Mammary epithelial cell (primary cell): ENCODE measurements at regions of chr1 and their contacts with region 1.

Region 1: DNA sequence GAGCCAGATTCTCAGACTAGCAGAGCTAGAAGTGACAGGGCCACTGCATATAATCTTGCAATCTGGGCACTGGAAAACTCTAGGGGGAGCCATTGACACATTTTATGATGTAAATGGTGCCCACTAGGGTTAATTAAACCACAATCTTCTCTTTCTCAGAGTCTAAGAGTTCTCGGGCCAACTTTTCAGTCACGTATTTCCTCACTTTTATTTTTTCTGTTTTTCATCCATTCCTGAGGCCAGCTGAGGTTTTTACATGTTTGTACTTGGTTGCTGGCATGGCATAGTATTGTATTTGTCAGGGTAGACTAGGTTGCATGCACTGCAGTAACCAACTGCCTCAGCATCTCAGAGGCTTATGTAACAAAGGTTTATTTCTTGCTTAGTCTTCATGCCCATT is 138.2 kb downstream of the ZNF326 start:
- DNase-seq: peak; percentile 63
- H3K4me3 ChIP-seq: no peak overlapping the region
- H3K27ac ChIP-seq: no peak overlapping the region
- H3K4me1 ChIP-seq: no peaks in the 10 kb centered on the region
- H3K27me3 ChIP-seq: peaks cover 3% of the 10 kb centered on the region
- CTCF ChIP-seq: peak; percentile 64 to 71

Region 2: DNA sequence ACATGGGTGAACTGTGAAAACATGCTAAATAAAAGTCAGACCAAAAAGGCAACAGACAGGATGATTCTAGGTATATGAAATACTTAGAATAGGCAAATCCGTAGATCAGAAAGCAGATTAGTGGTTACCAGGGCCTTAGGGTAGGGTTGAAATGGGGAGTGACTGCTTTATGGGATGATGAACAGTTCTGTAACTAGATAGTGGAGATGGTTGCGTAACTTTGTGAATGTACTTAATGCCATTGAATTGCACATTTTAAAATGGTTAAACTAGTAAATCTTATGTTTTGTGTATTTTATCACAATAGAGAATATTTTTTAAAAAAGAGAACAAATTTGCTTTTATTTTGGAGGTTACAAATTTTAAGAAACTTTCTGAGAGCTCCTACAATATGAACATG is 120.8 kb before region 1 on chr1:
- CTCF ChIA-PET with region 1: no interaction called
- dilution Hi-C with region 1: no loop called
- in situ Hi-C with region 1: no loop called
- intact Hi-C with region 1: no loop called
- DNase-seq: no peak
- H3K4me3 ChIP-seq: no peak overlapping the region
- H3K27ac ChIP-seq: no peak overlapping the region
- H3K4me1 ChIP-seq: no peaks in the 10 kb centered on the region
- H3K27me3 ChIP-seq: no peaks in the 10 kb centered on the region
- CTCF ChIP-seq: no peak

Region 3: DNA sequence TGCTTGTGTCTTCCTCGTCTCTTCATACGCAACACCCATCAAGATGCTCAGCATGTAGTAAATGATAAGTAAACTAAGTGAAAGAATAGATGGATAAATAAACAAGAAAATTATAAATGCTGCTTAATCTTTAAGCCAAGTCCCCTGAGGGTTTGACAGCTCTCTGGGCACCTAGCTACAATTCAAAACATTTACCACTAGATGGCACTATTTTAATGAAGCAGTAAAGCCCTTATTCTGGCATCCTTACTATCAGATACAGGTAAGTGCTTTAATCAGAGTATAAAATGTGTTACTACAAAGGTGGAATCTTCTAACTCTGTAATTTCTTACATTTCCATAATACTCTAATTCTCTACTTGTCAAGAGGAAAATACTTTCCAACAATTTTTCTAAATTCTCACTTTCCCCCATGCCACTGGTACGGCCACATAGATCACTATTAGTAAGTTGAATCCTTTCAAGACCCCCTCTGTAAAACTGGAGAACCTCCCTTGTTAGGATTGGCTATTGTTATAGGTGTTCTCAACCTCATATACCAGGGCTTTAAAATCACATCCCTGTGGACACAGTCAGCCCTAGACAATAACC is 446.2 kb after region 1 on chr1:
- CTCF ChIA-PET with region 1: no interaction called
- dilution Hi-C with region 1: no loop called
- in situ Hi-C with region 1: no loop called
- intact Hi-C with region 1: loop called (anchors 10 kb)
- DNase-seq: peak; percentile 21
- H3K4me3 ChIP-seq: no peak overlapping the region
- H3K27ac ChIP-seq: no peak overlapping the region
- H3K4me1 ChIP-seq: peaks cover 11% of the 10 kb centered on the region
- H3K27me3 ChIP-seq: peaks cover 2% of the 10 kb centered on the region
- CTCF ChIP-seq: peak; percentile 61

Region 4: DNA sequence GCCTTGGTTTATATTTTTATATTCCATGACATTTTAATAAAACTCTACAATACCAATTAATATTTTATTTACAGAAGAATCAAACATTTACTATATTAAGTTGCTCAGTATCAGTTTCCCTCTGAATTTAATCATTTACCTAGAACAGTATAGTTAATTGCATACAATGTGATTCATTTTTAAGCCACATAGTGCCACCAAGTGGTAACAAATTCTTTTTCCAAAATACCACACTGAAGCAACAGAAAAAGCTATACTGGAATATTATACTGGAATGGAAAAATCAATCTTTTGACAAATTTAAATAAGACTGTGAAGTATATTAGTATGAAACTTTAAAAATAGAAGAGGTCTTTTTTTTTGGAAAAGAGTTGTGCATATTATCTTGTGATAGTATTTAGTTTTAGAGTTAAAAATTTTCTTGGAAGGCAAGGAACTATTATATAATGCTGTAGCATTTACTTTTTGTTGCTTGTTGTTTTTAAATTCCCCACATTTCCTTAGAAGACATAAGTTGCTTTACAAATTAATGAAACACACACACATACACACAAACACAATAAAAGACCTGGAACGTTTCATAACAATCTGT is 831.4 kb after region 1 on chr1:
- CTCF ChIA-PET with region 1: no interaction called
- dilution Hi-C with region 1: no loop called
- in situ Hi-C with region 1: no loop called
- intact Hi-C with region 1: loop called (anchors 10 kb)
- DNase-seq: peak; percentile 13
- H3K4me3 ChIP-seq: no peak overlapping the region
- H3K27ac ChIP-seq: no peak overlapping the region
- H3K4me1 ChIP-seq: peaks cover 11% of the 10 kb centered on the region
- H3K27me3 ChIP-seq: no peaks in the 10 kb centered on the region
- CTCF ChIP-seq: peak; percentile 27 to 36